PC-9 (cell line): ENCODE measurements at regions of chr3 and their contacts with region 1.

Region 1: DNA sequence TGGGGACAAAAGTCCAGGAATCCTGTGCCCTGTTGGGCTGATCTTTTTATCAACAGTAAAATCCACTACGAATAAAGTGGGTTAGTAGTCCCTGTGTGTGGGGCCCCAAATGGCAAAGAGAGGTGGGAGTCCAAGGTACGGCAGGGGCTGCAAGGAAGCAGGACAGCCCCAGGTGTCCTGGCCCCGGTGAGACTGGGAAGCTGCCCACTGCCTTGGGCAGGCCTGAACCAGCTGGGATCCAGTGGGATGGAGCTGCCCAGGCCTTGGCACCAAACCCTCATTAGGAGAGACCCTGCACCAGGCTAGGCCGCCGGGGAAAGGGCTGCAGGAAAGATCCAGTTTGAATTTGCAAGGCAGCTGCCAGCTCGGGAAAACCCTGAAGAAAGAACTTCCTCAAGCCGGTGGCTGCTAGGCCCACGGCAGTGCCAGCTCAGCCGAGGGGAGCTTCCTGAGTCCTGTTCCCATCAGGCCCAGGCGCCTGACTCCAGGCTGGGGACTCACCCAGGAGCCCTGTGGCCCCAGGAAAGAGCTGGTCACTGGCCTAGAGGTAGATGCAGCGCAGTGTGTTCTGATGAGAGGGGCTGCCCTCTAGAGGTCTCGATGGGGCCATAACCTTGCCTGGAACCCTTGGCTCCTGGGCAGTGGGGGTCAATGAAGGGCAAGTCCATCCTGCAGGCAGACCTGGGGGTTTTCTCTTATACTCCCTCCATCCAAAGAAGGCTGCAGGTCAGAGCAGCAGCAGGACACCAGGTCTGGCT is 14.4 kb upstream of the GNAI2 start:
- DNase-seq: no peak
- H3K4me3 ChIP-seq: no peak overlapping the region
- H3K27ac ChIP-seq: no peak overlapping the region
- H3K4me1 ChIP-seq: no peaks in the 10 kb centered on the region; the same call in 1 of the 2 replicates
- H3K27me3 ChIP-seq: no peaks in the 10 kb centered on the region
- CTCF ChIP-seq: no peak

Region 2: GRCh38 chr3:48555949-48556792 is 1665.4 kb before region 1 on chr3:
- CTCF ChIA-PET with region 1: no interaction called
- POLR2A ChIA-PET with region 1: no interaction called
- intact Hi-C with region 1: no loop called
- DNase-seq: no peak
- H3K4me3 ChIP-seq: peak overlapping the region; percentile 66
- H3K27ac ChIP-seq: no peak overlapping the region
- H3K4me1 ChIP-seq: peaks cover 21% of the 10 kb centered on the region
- H3K27me3 ChIP-seq: no peaks in the 10 kb centered on the region
- CTCF ChIP-seq: no peak

Region 3: GRCh38 chr3:49539659-49540560 is 681.7 kb before region 1 on chr3:
- CTCF ChIA-PET with region 1: no interaction called
- POLR2A ChIA-PET with region 1: no interaction called
- intact Hi-C with region 1: loop called (anchors 5 kb)
- DNase-seq: peak; percentile 75 to 96
- H3K4me3 ChIP-seq: peak overlapping the region; percentile 54; the same call in 1 of the 2 replicates
- H3K27ac ChIP-seq: no peak overlapping the region
- H3K4me1 ChIP-seq: no peaks in the 10 kb centered on the region
- H3K27me3 ChIP-seq: peaks cover 23% of the 10 kb centered on the region; the same call in 1 of the 2 replicates
- CTCF ChIP-seq: peak; percentile 89